Activated B cell treated with CpG ODN at 0.5 μM for 24 hours (primary cell): ENCODE measurements at regions of chr10 and their contacts with region 1.

Region 1: GRCh38 chr10:62816331-62817120 is at the start of gene EGR2:
- DNase-seq: peak; percentile 96
- ATAC-seq: peak; percentile 75
- H3K4me3 Mint-ChIP-seq: peak within 1 kb of the TSS; percentile 92
- H3K27ac Mint-ChIP-seq: peak within 1 kb of the TSS; percentile 94
- H3K4me1 Mint-ChIP-seq: peaks cover 56% of the 10 kb centered on the region
- H3K27me3 Mint-ChIP-seq: peaks cover 8% of the 10 kb centered on the region
- CTCF ChIP-seq: no peak
- total RNA-seq, gene EGR2: 6.1 and 9.4 TPM in 2 replicates

Region 2: DNA sequence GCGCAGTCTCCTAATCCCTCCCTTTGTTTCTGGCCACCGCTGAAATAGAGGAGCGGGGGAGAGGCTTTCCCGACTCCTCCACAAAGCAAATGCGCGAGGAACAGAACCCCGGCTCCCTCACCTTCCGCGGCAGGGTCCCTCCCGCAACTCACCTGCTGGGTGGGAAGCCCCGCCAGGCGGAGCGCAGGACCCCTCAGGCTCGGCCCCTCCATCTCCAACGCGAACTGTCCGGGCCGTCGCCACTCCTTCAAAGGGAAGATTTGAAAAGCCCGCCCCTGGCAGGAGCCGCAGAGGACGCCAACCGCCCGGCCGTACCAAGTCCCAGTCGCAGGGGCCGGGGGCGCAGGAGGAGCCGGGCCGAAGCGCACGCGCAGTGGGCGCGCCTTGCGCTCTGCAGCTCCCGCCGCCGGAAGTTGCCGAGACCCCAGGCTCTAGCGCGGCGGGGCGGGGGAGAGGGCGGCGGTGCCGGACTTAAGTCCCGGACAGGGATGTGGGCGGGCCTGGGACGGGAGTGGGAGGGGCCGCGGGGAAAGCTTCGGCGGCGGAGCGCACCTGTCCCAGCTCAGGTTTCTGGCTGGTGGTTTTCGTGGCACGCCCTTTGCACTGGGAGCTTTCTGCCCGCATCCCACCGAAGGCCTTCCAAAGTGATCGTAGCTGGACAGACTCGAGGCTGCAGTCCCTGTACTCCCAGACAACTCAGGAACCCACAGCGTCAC is 548.0 kb before region 1 on chr10 and contains the start of gene RTKN2:
- CTCF ChIA-PET with region 1: no interaction called
- POLR2A ChIA-PET with region 1: no interaction called
- intact Hi-C with region 1: loop called (anchors 10 kb)
- DNase-seq: peak; percentile 64
- ATAC-seq: peak; percentile 91
- H3K4me3 Mint-ChIP-seq: peak within 1 kb of the TSS; percentile 87
- H3K27ac Mint-ChIP-seq: peak within 1 kb of the TSS; percentile 31
- H3K4me1 Mint-ChIP-seq: peaks cover 13% of the 10 kb centered on the region
- H3K27me3 Mint-ChIP-seq: peaks cover 3% of the 10 kb centered on the region
- CTCF ChIP-seq: no peak
- total RNA-seq, gene RTKN2: 0.09 and 0.17 TPM in 2 replicates

Region 3: DNA sequence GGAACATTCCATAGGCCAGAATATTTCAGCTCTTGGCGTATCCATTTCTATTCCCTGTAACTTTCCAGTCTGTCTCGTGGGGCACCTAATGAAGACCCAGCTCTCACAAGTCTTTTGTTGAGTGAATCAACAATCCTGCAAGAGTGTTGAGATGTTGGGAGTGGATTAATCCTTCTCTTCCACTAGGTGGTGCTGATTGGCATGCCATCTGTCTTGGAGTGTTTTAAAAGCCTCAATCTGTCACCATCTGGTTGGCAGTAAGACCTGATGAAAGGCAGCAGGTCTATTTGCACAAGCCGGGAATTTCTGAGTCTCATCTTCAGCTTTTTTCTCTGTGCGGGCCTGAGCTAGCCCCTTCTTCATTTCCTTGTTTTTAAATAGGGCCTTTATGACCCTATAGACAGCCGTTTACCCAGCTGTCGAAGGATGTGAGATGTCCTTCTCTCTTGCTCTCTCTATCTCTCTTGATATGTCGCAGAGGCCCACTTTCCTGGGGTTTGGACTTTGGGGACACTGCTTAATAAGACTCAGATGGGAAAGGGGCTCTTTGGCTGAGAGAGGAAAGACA is 261.8 kb before region 1 on chr10:
- CTCF ChIA-PET with region 1: no interaction called
- POLR2A ChIA-PET with region 1: interaction called, 3 read pairs
- intact Hi-C with region 1: loop called (anchors 1 kb)
- DNase-seq: no peak
- ATAC-seq: peak; percentile 60
- H3K4me3 Mint-ChIP-seq: no peak overlapping the region
- H3K27ac Mint-ChIP-seq: peak overlapping the region; percentile 22
- H3K4me1 Mint-ChIP-seq: peaks cover 7% of the 10 kb centered on the region
- H3K27me3 Mint-ChIP-seq: peaks cover 2% of the 10 kb centered on the region
- CTCF ChIP-seq: no peak

Region 4: GRCh38 chr10:62637249-62638061 is 179.1 kb before region 1 on chr10:
- CTCF ChIA-PET with region 1: interaction called, 7 read pairs
- POLR2A ChIA-PET with region 1: interaction called, 14 read pairs
- intact Hi-C with region 1: loop called (anchors 1 kb)
- DNase-seq: no peak
- ATAC-seq: peak; percentile 71
- H3K4me3 Mint-ChIP-seq: no peak overlapping the region
- H3K27ac Mint-ChIP-seq: no peak overlapping the region
- H3K4me1 Mint-ChIP-seq: peaks cover 38% of the 10 kb centered on the region
- H3K27me3 Mint-ChIP-seq: no peaks in the 10 kb centered on the region
- CTCF ChIP-seq: no peak

Region 5: DNA sequence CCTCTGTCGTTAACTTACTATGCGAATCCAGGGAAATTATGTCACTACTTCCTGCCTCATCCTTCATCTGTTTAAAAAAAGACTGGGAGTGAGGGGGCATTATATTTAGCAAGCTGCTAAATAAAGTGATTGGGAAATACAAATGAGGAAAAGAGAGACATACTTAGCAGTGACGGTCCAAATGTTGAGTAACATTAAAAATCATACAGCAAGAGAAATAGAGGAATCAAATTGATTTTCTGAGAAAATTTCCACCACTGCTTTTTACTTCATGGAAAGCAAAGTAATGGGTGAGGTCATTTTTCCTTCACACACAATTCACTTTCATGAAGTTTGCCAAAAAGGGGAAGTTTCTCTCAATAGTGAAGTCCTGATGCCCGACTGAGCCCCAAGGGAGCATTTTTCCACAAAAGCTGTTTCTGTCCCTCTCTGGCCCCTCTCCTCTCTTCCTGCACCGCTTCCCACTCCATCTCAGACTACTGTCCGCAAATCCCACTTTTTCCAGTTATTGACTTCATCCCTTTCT is 73.9 kb before region 1 on chr10:
- CTCF ChIA-PET with region 1: interaction called, 4 read pairs
- POLR2A ChIA-PET with region 1: interaction called, 3 read pairs
- intact Hi-C with region 1: loop called (anchors 2 kb)
- DNase-seq: no peak
- ATAC-seq: peak; percentile 85
- H3K4me3 Mint-ChIP-seq: peak overlapping the region; percentile 24
- H3K27ac Mint-ChIP-seq: peak overlapping the region; percentile 25
- H3K4me1 Mint-ChIP-seq: peaks cover 17% of the 10 kb centered on the region
- H3K27me3 Mint-ChIP-seq: no peaks in the 10 kb centered on the region
- CTCF ChIP-seq: no peak

Region 6: GRCh38 chr10:63157845-63158624 is 341.5 kb after region 1 on chr10:
- CTCF ChIA-PET with region 1: interaction called, 8 read pairs
- POLR2A ChIA-PET with region 1: no interaction called
- intact Hi-C with region 1: loop called (anchors 1 kb)
- DNase-seq: no peak
- ATAC-seq: peak; percentile 67
- H3K4me3 Mint-ChIP-seq: no peak overlapping the region
- H3K27ac Mint-ChIP-seq: no peak overlapping the region
- H3K4me1 Mint-ChIP-seq: peaks cover 9% of the 10 kb centered on the region
- H3K27me3 Mint-ChIP-seq: no peaks in the 10 kb centered on the region
- CTCF ChIP-seq: no peak